Activated CD4-positive, alpha-beta memory T cell treated with anti-CD3 and anti-CD28 coated beads for 36 hours (primary cell): ENCODE measurements at regions of chr7 and their contacts with region 1.

Region 1: GRCh38 chr7:92421676-92422435 is 25.4 kb upstream of the GATAD1 start:
- DNase-seq: no peak
- H3K4me3 Mint-ChIP-seq: no peak overlapping the region
- H3K27ac Mint-ChIP-seq: no peak overlapping the region
- H3K4me1 Mint-ChIP-seq: peaks cover 10% of the 10 kb centered on the region
- H3K27me3 Mint-ChIP-seq: peaks cover 13% of the 10 kb centered on the region

Region 2: DNA sequence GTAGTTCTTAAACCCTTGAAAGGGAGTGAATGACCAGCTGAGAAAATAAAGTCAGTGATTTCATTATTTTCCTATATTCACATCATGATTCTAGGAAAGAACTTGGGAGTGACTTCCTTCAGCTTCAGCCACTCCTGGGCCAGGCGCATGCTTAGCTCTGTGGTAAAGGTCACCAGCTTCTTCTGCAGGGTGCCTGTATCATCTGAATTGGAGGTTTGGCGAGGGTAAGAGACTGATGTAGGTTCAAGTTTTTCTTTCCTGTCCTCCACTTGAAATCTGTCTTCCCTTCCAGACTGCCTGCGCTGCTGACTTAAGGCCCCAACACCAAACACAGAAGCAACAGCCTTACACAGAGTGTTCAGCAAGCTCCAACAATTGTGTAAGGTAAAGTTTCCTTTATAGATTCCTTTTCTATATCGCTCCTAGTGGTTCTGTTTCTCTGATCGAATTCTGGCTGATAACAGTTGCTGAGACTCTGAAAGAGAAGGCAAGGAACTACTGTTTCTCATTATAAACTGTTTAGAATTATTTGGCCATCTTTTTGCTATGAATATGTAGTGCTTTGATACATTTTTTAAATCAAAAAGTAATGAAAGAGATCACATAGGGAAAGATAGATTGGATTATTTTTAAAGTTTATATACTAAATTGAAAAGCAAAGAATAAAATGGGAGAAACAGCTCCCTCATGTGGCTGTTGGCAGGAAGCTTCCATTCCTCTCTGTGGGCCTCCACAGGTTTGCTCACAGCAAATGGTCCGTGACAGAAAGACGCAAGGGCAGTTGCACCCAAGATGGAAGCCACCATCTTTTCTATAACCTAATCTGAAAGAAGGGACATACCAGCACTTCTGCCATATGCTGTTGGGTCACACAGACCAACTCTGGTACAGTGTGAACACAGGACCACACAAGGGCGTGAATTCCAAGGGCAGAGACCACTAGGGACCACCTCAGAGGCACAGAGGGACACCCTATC is 39.5 kb after region 1 on chr7:
- CTCF ChIA-PET with region 1: interaction called, 12 read pairs
- POLR2A ChIA-PET with region 1: no interaction called
- intact Hi-C with region 1: loop called (anchors 1 kb)
- DNase-seq: peak; percentile 41
- H3K4me3 Mint-ChIP-seq: no peak overlapping the region
- H3K27ac Mint-ChIP-seq: no peak overlapping the region
- H3K4me1 Mint-ChIP-seq: no peaks in the 10 kb centered on the region
- H3K27me3 Mint-ChIP-seq: no peaks in the 10 kb centered on the region

Region 3: DNA sequence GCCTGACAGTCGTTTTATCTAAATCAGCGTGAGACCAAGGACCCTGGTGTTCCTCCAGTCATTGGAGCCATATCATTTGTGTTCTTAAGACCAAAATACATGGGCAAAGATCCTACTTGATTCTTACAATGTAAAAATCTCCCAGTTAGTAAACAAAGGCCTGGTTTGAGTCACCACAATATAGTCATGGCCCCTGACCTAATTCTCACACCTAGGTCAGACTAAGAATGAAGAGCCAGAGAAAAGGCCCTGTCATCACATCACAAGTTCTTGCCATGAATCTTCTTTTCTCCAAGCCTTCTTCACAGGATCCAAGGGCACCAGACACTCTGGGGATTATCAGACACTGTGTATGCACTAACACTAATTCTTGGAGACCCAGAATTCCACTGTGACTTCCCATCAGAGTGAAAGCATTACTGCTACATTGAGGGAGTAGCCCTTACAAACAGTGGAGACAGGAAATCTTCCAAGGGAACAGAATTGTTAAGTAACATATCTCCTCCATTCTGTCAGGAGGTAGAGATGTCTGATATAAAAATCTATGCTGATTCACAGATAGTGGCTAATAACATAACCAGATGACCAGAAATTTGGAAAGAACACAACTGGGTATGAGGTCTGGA is 63.5 kb after region 1 on chr7:
- CTCF ChIA-PET with region 1: no interaction called
- POLR2A ChIA-PET with region 1: no interaction called
- intact Hi-C with region 1: no loop called
- DNase-seq: no peak
- H3K4me3 Mint-ChIP-seq: no peak overlapping the region
- H3K27ac Mint-ChIP-seq: no peak overlapping the region
- H3K4me1 Mint-ChIP-seq: no peaks in the 10 kb centered on the region
- H3K27me3 Mint-ChIP-seq: no peaks in the 10 kb centered on the region